Prostate gland (tissue), 2 donors: ENCODE measurements at regions of chr13 and their contacts with region 1.

Region 1: DNA sequence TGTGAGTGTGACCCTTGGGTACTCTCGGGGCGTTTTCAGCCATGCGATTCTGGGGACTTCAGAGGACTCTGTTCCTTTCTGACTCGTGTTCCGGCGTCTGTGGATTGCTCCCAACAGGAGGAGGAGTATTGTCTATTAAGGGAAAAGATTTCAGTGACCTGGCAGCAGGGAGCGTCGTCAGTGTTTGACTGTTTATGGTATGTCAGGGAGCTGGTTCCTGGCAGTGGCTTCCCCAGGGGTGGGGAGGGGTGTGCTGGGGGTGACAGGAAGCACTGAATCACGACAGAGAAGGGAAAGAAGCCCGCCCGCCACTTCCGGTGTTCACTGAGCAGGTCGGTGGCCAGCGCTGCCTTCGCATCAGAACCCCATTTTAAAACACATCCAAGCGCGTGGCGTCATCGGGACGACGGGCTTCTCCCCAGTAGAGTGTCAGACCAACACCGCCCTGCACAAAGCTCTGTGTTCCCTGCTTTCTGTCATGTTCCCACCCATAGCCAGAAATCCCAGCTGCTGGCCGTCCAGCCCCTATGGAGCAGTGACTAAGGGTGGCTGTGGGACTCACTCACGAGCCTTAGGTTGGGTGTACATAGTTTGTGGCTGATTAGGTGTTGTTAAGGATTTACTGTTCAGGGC is 33.8 kb downstream of the COL4A2 start:
- DNase-seq: peak; percentile 37
- H3K4me3 ChIP-seq: no peak overlapping the region
- H3K27ac ChIP-seq: peak overlapping the region; percentile 77 to 82
- H3K4me1 ChIP-seq: peaks cover 5% of the 10 kb centered on the region
- H3K27me3 ChIP-seq: no peaks in the 10 kb centered on the region
- CTCF ChIP-seq: no peak
- POLR2A ChIP-seq: no peak

Region 2: GRCh38 chr13:110250258-110250891 is 90.6 kb before region 1 on chr13:
- intact Hi-C with region 1: loop called (anchors 2 kb)
- DNase-seq: no peak
- H3K4me3 ChIP-seq: no peak overlapping the region
- H3K27ac ChIP-seq: peak overlapping the region; percentile 62 to 65
- H3K4me1 ChIP-seq: no peaks in the 10 kb centered on the region
- H3K27me3 ChIP-seq: no peaks in the 10 kb centered on the region
- CTCF ChIP-seq: no peak
- POLR2A ChIP-seq: no peak

Region 3: DNA sequence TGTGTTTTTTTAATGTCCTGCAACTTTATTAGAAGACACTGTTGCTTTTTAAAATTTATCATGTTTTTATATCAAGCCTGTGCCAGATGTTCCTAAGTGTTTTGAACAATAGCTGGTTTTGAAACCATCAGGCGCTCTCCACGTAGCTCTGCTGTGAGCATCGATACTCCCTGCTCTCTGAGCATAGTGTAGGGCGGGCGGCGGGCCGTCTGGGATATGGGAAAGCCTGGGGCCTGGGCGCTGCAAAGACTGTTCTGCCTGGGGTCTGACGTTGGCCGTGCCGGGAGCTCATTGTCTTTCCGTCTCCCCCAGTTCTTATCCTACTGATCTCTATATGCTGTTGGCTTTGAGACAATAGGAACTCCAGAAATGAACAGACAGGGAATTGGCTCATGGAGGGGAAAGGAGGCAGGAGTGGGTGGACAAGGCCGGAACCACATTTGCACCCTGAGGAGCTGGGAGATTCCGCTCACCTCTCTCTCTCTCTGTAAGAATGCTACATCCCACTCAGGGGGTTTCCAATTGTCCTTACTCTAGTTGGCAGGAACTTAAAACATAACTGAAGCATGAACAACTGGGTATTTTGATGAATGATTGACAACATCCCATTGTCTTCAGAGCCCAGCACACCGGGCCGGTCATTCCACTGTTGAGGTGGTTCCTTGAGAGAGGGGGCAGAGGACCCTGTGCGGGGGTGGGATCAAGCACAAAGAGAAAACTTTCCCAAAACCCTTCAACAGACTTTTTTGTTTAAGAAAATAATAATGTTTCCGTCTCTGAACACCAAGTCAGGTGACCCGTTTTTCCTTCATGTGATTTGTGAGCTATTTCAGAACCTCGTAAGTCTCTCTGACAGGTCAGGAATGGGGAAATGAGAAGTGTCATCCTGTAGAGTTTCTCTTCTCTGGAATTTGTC is 30.9 kb after region 1 on chr13:
- intact Hi-C with region 1: loop called (anchors 1 kb)
- DNase-seq: no peak
- H3K4me3 ChIP-seq: no peak overlapping the region
- H3K27ac ChIP-seq: peak overlapping the region; percentile 56 to 69
- H3K4me1 ChIP-seq: no peaks in the 10 kb centered on the region
- H3K27me3 ChIP-seq: no peaks in the 10 kb centered on the region
- CTCF ChIP-seq: no peak
- POLR2A ChIP-seq: no peak

Region 4: GRCh38 chr13:110396913-110397381 is 56.0 kb after region 1 on chr13:
- intact Hi-C with region 1: loop called (anchors 2 kb)
- DNase-seq: peak; percentile 85
- H3K4me3 ChIP-seq: no peak overlapping the region
- H3K27ac ChIP-seq: peak overlapping the region; percentile 80 to 81
- H3K4me1 ChIP-seq: no peaks in the 10 kb centered on the region
- H3K27me3 ChIP-seq: no peaks in the 10 kb centered on the region
- CTCF ChIP-seq: peak in 1 of 4 experiments; percentile 11
- POLR2A ChIP-seq: no peak